ENCODE measurements at regions of chr15 and their contacts with region 1.

Region 1: DNA sequence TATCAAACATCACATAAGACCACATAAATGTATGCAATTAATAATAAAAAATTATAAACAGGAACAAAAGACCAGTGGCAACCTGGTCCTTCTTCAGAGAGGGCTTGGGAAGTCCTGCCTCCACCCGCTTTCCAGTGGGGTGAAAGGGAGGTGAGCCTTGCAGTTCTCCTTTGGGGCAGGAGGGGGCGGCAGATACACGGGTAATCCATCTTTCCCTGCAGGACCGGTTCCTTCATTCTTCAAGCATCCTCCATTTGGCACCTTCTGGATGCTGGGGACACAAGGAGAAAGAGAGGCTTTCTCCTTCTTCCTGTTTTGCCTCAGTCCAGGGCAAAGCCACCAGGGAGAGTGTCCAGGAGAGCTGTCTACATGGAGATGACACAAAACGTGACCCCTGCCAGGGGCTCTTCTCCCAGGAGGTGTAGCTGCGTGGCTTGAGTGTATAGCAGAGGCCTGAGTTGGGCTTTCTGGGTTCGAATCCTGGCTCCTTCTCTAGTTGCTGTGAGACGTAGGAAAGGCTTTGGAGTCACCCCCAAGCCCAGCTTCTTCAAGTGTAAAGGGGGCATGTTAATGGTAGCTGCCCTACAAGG is 23.2 kb downstream of the RPLP1 start:
- DNase-seq: peak; percentile 80
- ATAC-seq: peak; percentile 84
- H3K4me3 ChIP-seq: no peak overlapping the region
- H3K27ac ChIP-seq: no peak overlapping the region
- H3K4me1 ChIP-seq: peaks cover 10% of the 10 kb centered on the region
- H3K27me3 ChIP-seq: no peaks in the 10 kb centered on the region
- CTCF ChIP-seq: peak; percentile 79

Region 2: DNA sequence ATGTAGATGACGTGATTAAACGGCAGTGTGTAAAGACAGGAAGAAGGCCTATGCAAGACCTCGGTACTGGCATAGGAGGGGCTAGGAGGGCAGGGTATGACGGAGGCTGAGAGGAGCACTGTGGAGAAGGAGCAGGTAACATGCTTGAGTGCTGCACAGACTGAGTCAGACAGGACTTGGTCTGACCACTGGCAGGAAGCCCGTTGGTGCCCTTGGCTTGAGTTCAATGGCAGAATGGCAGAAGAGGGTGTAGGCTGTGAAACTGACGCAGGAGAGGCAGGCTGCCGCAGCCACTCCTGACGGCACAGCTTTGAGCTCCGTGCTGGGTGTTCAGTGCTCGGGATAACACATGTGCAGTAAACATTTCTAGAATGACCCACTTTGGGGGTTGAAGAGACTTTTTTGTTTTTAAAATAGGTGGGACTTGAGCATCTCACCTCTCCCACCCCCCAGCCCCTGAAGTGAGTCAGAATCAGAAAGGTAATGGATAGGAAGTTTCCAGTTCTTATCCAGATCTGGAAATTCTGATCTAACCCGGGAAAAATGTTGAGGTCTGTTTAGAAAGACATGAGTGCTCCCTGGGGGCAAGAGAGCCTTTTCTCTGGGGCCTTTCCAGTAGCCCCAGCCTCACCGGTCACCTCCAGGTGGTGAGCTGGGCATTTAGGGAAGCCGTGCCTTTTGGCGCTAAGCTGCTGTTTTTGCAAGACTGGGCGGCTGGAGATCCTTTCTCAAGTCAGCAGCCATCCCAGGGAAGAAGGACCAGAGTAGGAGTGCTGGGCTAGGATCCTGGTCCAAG is 103.1 kb after region 1 on chr15:
- CTCF ChIA-PET with region 1: no interaction called
- POLR2A ChIA-PET with region 1: no interaction called
- intact Hi-C with region 1: no loop called
- DNase-seq: peak; percentile 97
- ATAC-seq: peak; percentile 82
- H3K4me3 ChIP-seq: peak overlapping the region; percentile 36; the same call in 1 of the 2 replicates
- H3K27ac ChIP-seq: peak overlapping the region; percentile 90
- H3K4me1 ChIP-seq: peaks cover 46% of the 10 kb centered on the region
- H3K27me3 ChIP-seq: no peaks in the 10 kb centered on the region
- CTCF ChIP-seq: 0 out of 2 replicates have a peak, but pooled peaks have one; percentile 18

Region 3: GRCh38 chr15:70463460-70463881 is 987.6 kb after region 1 on chr15:
- CTCF ChIA-PET with region 1: no interaction called
- POLR2A ChIA-PET with region 1: no interaction called
- intact Hi-C with region 1: loop called (anchors 5 kb)
- DNase-seq: no peak
- ATAC-seq: no peak
- H3K4me3 ChIP-seq: no peak overlapping the region
- H3K27ac ChIP-seq: no peak overlapping the region
- H3K4me1 ChIP-seq: peaks cover 6% of the 10 kb centered on the region; the same call in 1 of the 2 replicates
- H3K27me3 ChIP-seq: no peaks in the 10 kb centered on the region
- CTCF ChIP-seq: no peak

Measured in PC-3 (cell line).